Naive thymus-derived CD4-positive, alpha-beta T cell (primary cell): ENCODE measurements at regions of chr14 and their contacts with region 1.

Region 1: GRCh38 chr14:57199921-57200320 is 68.8 kb downstream of the EXOC5 start:
- DNase-seq: no peak
- ATAC-seq: no peak
- H3K4me3 ChIP-seq: no peak overlapping the region
- H3K4me3 Mint-ChIP-seq: no peak overlapping the region
- H3K27ac ChIP-seq: no peak overlapping the region
- H3K27ac Mint-ChIP-seq: no peak overlapping the region
- H3K4me1 ChIP-seq: no peaks in the 10 kb centered on the region
- H3K4me1 Mint-ChIP-seq: no peaks in the 10 kb centered on the region
- H3K27me3 ChIP-seq: no peaks in the 10 kb centered on the region
- H3K27me3 Mint-ChIP-seq: peaks cover 6 to 13% (median 11%) of the 10 kb centered on the region in 5 donors

Region 2: DNA sequence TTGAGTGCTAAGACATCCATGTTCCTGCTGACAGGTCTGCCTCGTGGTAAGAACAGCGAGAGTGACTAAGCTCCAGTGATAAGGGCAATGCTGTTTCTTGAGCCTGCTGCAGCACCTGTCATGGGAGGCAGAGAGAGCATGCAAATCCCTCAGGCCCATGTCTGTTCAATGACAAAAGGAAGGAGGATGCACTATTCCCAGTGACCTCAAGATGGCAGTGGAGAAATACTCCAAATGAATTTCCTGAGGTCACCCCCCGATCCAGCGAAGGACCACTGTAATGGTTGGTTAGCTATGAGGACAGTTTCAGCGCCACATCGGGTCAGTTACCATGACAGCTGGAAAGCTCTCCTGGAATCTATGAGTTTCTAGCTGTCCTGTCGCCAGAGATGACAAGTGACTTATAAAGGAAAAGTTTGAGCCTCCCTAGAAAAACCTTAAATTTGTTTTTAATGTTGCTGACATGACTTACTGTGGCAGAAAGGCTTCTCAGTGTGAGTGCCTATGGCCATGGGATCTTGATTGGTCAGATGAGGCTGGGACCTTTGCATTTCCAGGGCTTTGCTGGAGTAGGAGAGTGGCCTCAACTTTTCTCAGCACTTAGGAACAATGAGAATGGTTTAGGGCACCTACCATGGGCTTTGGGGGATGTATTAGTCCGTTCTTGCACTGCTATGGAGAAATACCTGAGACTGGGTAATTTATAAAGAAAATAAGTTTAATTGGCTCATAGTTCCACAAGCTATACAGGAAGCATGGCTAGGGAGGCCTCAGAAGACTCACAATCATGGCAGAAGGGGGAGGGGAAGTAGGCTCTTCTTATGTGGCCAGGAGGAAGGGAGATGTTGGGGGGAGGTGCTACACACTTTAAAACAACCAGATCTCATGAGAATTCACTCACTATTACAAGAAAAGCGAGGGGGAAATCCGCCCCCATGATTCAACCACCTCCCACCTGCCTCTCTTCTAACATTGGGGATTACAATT is 708.3 kb before region 1 on chr14:
- CTCF ChIA-PET with region 1: interaction called, 3 read pairs
- POLR2A ChIA-PET with region 1: no interaction called
- intact Hi-C with region 1: loop called in 1 of 2 experiments (anchors 2 kb)
- DNase-seq: peak in 5 of 9 donors; percentile 10 to 36 (median 21)
- ATAC-seq: no peak
- H3K4me3 ChIP-seq: peak overlapping the region; percentile 22
- H3K4me3 Mint-ChIP-seq: peak overlapping the region in 6 of 10 donors; percentile 40 to 59 (median 48)
- H3K27ac ChIP-seq: no peak overlapping the region
- H3K27ac Mint-ChIP-seq: no peak overlapping the region
- H3K4me1 ChIP-seq: no peaks in the 10 kb centered on the region
- H3K4me1 Mint-ChIP-seq: peaks cover 0 to 13% (median 10%) of the 10 kb centered on the region in 7 donors
- H3K27me3 ChIP-seq: no peaks in the 10 kb centered on the region
- H3K27me3 Mint-ChIP-seq: peaks cover 0 to 6% (median 0%) of the 10 kb centered on the region in 5 donors

Region 3: DNA sequence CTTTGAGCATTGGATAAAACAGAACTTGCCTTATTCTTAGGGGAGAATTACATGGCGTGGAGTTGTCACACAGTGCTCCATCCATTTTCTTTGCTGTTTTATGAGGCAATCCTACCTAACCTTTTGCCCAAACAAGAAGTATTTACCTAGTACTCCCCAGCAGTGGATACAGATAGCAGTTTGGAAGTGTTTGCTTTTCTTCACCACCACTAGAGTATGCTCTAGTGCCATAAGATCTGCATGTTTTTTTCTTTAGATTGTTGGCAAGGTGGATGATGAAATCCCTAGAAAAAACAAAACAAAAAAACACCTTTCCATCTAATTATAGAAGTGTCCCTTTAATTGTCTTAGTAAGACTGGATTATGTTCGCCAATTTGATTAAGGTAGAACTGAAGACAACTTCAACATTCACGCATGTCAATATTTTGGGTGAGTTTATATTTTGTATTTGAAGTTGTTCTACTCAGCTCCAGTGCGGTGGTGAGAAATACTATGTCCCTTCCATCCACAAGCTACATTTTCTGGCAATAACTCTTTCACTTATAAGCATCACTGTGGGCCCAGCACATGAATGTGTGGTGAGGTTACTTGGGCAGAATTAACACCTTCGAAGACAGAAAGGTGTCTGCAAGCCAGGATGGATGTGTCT is 643.9 kb before region 1 on chr14:
- CTCF ChIA-PET with region 1: interaction called, 4 read pairs
- POLR2A ChIA-PET with region 1: no interaction called
- intact Hi-C with region 1: loop called in 1 of 2 experiments (anchors 10 kb)
- DNase-seq: no peak
- ATAC-seq: no peak
- H3K4me3 ChIP-seq: no peak overlapping the region
- H3K4me3 Mint-ChIP-seq: no peak overlapping the region
- H3K27ac ChIP-seq: no peak overlapping the region
- H3K27ac Mint-ChIP-seq: no peak overlapping the region
- H3K4me1 ChIP-seq: no peaks in the 10 kb centered on the region
- H3K4me1 Mint-ChIP-seq: peaks cover 0 to 1% (median 0%) of the 10 kb centered on the region in 7 donors
- H3K27me3 ChIP-seq: peaks cover 0 to 4% of the 10 kb centered on the region in 2 donors
- H3K27me3 Mint-ChIP-seq: peaks cover 11 to 42% (median 18%) of the 10 kb centered on the region in 5 donors

Region 4: GRCh38 chr14:57390028-57390805 is 190.3 kb after region 1 on chr14 and contains the start of gene NAA30:
- CTCF ChIA-PET with region 1: no interaction called
- POLR2A ChIA-PET with region 1: no interaction called
- intact Hi-C with region 1: loop called in 1 of 2 experiments (anchors 10 kb)
- DNase-seq: peak; percentile 80 to 97 (median 92)
- ATAC-seq: peak; percentile 98
- H3K4me3 ChIP-seq: peak within 1 kb of the TSS; percentile 68
- H3K4me3 Mint-ChIP-seq: peak within 1 kb of the TSS; percentile 86 to 98 (median 94)
- H3K27ac ChIP-seq: peak within 1 kb of the TSS; percentile 72
- H3K27ac Mint-ChIP-seq: peak within 1 kb of the TSS; percentile 88 to 99 (median 95)
- H3K4me1 ChIP-seq: peaks cover 11 to 13% of the 10 kb centered on the region in 2 donors
- H3K4me1 Mint-ChIP-seq: peaks cover 31 to 58% (median 40%) of the 10 kb centered on the region in 7 donors
- H3K27me3 ChIP-seq: no peaks in the 10 kb centered on the region
- H3K27me3 Mint-ChIP-seq: peaks cover 0 to under 1% (median 0%) of the 10 kb centered on the region in 5 donors
- total RNA-seq, gene NAA30: 14.6 to 19.6 (median 16.2) TPM